Posterior vena cava (tissue), 2 donors: ENCODE measurements at regions of chr5 and their contacts with region 1.

Region 1: DNA sequence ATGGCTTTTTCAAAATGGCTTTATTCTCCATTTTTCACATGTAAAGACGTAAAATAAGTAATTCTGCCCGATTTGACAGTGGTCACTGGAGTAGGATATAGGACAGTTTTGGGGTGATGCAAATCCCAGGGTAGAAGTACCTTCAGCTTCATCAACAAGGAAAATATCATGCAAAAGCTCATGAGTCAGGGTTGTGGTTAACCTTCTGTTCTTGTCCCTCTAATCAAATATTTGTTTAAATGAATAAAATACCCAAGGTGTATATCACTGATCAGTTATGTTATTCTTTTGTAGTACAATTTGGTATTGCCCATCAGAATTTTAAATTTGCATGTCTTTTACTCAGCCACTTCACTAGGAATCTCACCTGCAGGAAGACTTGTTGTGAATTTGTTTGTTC is 40.0 kb downstream of the FBXL7 start:
- DNase-seq: no peak

Region 2: GRCh38 chr5:15612915-15613635 is 73.1 kb after region 1 on chr5:
- intact Hi-C with region 1: loop called in 1 of 2 experiments (anchors 2 kb)
- DNase-seq: no peak